Breast epithelium (tissue), 4 donors: ENCODE measurements at regions of chr17 and their contacts with region 1.

Region 1: DNA sequence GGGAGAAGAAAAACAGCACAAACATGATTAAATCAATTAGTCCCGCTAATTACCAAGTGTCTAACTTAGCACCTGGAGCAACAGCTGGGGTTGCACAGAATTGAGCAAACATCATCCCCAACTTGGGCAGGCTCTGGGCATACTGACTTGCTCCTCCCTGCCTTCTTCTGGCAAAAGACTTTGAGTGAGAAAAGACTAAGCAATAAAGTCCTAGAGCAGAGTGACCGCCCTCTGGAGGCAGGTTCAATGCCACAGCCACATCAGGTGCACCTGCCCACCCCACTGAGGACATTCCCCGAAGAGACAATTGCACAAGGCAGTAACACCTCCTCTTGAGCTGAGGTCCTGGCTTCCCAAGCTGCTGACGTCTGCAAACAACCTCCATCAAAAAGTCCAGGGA is 358.3 kb downstream of the SOX9 start:
- DNase-seq: no peak
- H3K4me3 ChIP-seq: no peak overlapping the region
- H3K27ac ChIP-seq: no peak overlapping the region
- H3K4me1 ChIP-seq: no peaks in the 10 kb centered on the region
- H3K27me3 ChIP-seq: no peaks in the 10 kb centered on the region
- CTCF ChIP-seq: no peak
- POLR2A ChIP-seq: no peak

Region 2: GRCh38 chr17:70716551-70716950 is 1762.6 kb before region 1 on chr17:
- intact Hi-C with region 1: loop called (anchors 5 kb)
- DNase-seq: no peak
- H3K4me3 ChIP-seq: no peak overlapping the region
- H3K27ac ChIP-seq: no peak overlapping the region
- H3K4me1 ChIP-seq: no peaks in the 10 kb centered on the region
- H3K27me3 ChIP-seq: no peaks in the 10 kb centered on the region
- CTCF ChIP-seq: no peak
- POLR2A ChIP-seq: no peak